Caco-2 (cell line): ENCODE measurements at regions of chr10 and their contacts with region 1.

Region 1: GRCh38 chr10:27558612-27559020 is 54.5 kb downstream of the RAB18 start:
- DNase-seq: peak; percentile 66 to 74
- H3K4me3 ChIP-seq: no peak overlapping the region
- H3K4me3 Mint-ChIP-seq: no peak overlapping the region
- H3K27ac Mint-ChIP-seq: no peak overlapping the region
- H3K4me1 ChIP-seq: no peaks in the 10 kb centered on the region
- H3K4me1 Mint-ChIP-seq: no peaks in the 10 kb centered on the region
- H3K27me3 ChIP-seq: no peaks in the 10 kb centered on the region
- H3K27me3 Mint-ChIP-seq: peaks cover 2% of the 10 kb centered on the region
- CTCF ChIP-seq: peak; percentile 88 to 93

Region 2: GRCh38 chr10:27276581-27276980 is 282.0 kb before region 1 on chr10:
- CTCF ChIA-PET with region 1: no interaction called
- POLR2A ChIA-PET with region 1: no interaction called
- intact Hi-C with region 1: no loop called
- DNase-seq: no peak
- H3K4me3 ChIP-seq: no peak overlapping the region
- H3K4me3 Mint-ChIP-seq: no peak overlapping the region
- H3K27ac Mint-ChIP-seq: no peak overlapping the region
- H3K4me1 ChIP-seq: no peaks in the 10 kb centered on the region
- H3K4me1 Mint-ChIP-seq: no peaks in the 10 kb centered on the region
- H3K27me3 ChIP-seq: no peaks in the 10 kb centered on the region
- H3K27me3 Mint-ChIP-seq: peaks cover 24% of the 10 kb centered on the region
- CTCF ChIP-seq: no peak

Region 3: DNA sequence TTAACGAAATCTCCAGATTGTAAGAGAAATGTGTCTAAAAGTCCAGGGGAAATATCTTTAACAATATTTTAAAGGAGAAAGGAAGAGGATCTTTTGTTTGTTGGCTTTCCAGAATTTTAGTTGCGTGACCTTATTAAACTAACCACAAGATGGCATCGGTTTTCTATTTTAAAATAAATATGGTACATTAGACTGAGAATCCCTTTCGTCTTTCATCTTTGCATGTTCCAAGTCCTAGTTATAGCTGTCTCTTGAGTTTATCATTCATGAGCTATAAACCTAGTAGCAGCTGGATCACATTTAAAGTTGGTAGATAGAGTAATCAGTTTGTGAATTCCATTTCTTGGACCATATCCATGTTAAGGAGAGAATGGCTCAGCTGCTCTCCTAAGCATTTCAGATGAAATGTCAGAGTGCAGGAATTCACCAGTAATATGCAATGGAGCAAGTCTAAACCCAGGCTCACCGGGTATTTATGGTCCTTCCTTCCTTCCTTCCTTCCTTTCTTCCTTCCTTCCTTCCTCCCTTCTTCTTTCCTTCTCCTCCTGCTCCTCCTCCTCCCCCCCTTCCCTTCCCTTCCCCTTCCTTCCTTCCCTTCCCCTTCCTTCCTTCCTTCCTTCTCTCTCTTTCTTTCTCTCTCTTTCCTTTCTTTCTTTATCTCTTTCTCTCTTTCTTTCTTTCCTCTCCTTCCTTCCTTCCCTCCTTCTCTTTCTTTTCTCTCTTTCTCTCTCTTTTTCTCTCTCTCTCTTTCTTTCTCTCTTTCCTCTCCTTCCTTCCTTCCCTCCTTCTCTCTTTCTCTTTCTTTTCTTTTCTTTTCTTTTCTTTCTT is 112.3 kb before region 1 on chr10:
- CTCF ChIA-PET with region 1: interaction called, 4 read pairs
- POLR2A ChIA-PET with region 1: no interaction called
- intact Hi-C with region 1: loop called (anchors 2 kb)
- DNase-seq: peak in 1 of 2 experiments; percentile 34
- H3K4me3 ChIP-seq: no peak overlapping the region
- H3K4me3 Mint-ChIP-seq: peak overlapping the region; percentile 4
- H3K27ac Mint-ChIP-seq: no peak overlapping the region
- H3K4me1 ChIP-seq: no peaks in the 10 kb centered on the region
- H3K4me1 Mint-ChIP-seq: peaks cover 10% of the 10 kb centered on the region
- H3K27me3 ChIP-seq: no peaks in the 10 kb centered on the region
- H3K27me3 Mint-ChIP-seq: no peaks in the 10 kb centered on the region
- CTCF ChIP-seq: peak; percentile 36 to 51

Region 4: DNA sequence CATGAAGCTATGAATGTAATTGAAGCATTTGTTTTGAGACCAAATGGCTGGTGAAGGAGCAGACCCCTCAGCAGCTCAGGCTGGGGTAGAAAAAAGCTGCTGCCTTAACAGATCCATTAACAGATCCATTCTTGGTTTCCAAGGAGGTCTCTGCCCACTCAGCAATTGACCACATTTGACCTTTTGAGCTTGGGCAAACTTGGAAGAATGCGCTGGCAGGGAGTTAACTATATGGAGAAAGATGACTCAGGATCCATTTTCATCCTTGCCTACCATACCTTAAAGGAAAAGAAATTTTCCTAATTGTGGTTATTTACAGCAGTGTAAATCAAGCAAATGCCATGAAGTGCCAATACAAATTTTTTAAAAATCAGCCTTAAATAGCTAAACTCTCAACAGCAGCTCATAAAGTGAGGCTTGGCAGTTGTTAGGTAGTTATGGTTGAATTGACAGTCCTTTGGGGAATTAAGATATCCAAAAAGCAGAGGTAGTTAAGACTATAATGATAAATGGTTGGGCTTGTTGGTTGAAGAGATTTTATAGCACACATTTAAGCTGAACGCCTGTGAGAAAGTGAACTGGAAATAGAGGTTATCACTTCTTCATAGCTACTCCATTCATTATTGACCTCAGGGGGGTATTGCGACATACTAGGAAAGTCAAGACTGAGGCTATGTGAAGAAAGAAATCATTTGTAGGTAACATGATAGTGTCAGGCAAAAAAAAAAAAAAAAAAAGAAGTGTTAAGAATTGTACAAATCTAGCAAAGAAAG is 103.1 kb after region 1 on chr10:
- CTCF ChIA-PET with region 1: interaction called, 4 read pairs
- POLR2A ChIA-PET with region 1: no interaction called
- intact Hi-C with region 1: loop called (anchors 1 kb)
- DNase-seq: no peak
- H3K4me3 ChIP-seq: no peak overlapping the region
- H3K4me3 Mint-ChIP-seq: no peak overlapping the region
- H3K27ac Mint-ChIP-seq: no peak overlapping the region
- H3K4me1 ChIP-seq: no peaks in the 10 kb centered on the region
- H3K4me1 Mint-ChIP-seq: no peaks in the 10 kb centered on the region
- H3K27me3 ChIP-seq: no peaks in the 10 kb centered on the region; the same call in 1 of the 2 replicates
- H3K27me3 Mint-ChIP-seq: peaks cover 42% of the 10 kb centered on the region
- CTCF ChIP-seq: no peak

Region 5: GRCh38 chr10:28179006-28179742 is 620.6 kb after region 1 on chr10:
- CTCF ChIA-PET with region 1: no interaction called
- POLR2A ChIA-PET with region 1: no interaction called
- intact Hi-C with region 1: loop called (anchors 5 kb)
- DNase-seq: peak in 1 of 2 experiments; percentile 69
- H3K4me3 ChIP-seq: no peak overlapping the region
- H3K4me3 Mint-ChIP-seq: no peak overlapping the region
- H3K27ac Mint-ChIP-seq: no peak overlapping the region
- H3K4me1 ChIP-seq: 0 out of 2 replicates have a peak, but pooled peaks cover 7% of the 10 kb centered on the region
- H3K4me1 Mint-ChIP-seq: peaks cover 22% of the 10 kb centered on the region
- H3K27me3 ChIP-seq: no peaks in the 10 kb centered on the region
- H3K27me3 Mint-ChIP-seq: no peaks in the 10 kb centered on the region
- CTCF ChIP-seq: peak; percentile 75 to 88

Region 6: GRCh38 chr10:28393966-28394568 is 835.5 kb after region 1 on chr10:
- CTCF ChIA-PET with region 1: no interaction called
- POLR2A ChIA-PET with region 1: no interaction called
- intact Hi-C with region 1: loop called (anchors 5 kb)
- DNase-seq: peak; percentile 79 to 82
- H3K4me3 ChIP-seq: no peak overlapping the region
- H3K4me3 Mint-ChIP-seq: no peak overlapping the region
- H3K27ac Mint-ChIP-seq: no peak overlapping the region
- H3K4me1 ChIP-seq: no peaks in the 10 kb centered on the region
- H3K4me1 Mint-ChIP-seq: peaks cover 8% of the 10 kb centered on the region
- H3K27me3 ChIP-seq: no peaks in the 10 kb centered on the region
- H3K27me3 Mint-ChIP-seq: no peaks in the 10 kb centered on the region
- CTCF ChIP-seq: peak; percentile 99